ENCODE measurements at regions of chr6 and their contacts with region 1.

Region 1: GRCh38 chr6:56359201-56359899 is 112.0 kb upstream of the COL21A1 start:
- DNase-seq: peak; percentile 54 to 70
- H3K4me3 ChIP-seq: no peak overlapping the region
- H3K4me3 Mint-ChIP-seq: no peak overlapping the region
- H3K27ac Mint-ChIP-seq: no peak overlapping the region
- H3K4me1 ChIP-seq: no peaks in the 10 kb centered on the region
- H3K4me1 Mint-ChIP-seq: peaks cover under 1% of the 10 kb centered on the region
- H3K27me3 ChIP-seq: no peaks in the 10 kb centered on the region
- H3K27me3 Mint-ChIP-seq: no peaks in the 10 kb centered on the region
- CTCF ChIP-seq: peak; percentile 73 to 84

Region 2: GRCh38 chr6:56314683-56315523 is 44.4 kb before region 1 on chr6:
- CTCF ChIA-PET with region 1: no interaction called
- POLR2A ChIA-PET with region 1: no interaction called
- intact Hi-C with region 1: loop called (anchors 2 kb)
- DNase-seq: peak; percentile 35 to 60
- H3K4me3 ChIP-seq: no peak overlapping the region
- H3K4me3 Mint-ChIP-seq: no peak overlapping the region
- H3K27ac Mint-ChIP-seq: no peak overlapping the region
- H3K4me1 ChIP-seq: no peaks in the 10 kb centered on the region
- H3K4me1 Mint-ChIP-seq: peaks cover 8% of the 10 kb centered on the region
- H3K27me3 ChIP-seq: no peaks in the 10 kb centered on the region
- H3K27me3 Mint-ChIP-seq: no peaks in the 10 kb centered on the region
- CTCF ChIP-seq: peak; percentile 72 to 76

Region 3: GRCh38 chr6:56484669-56485068 is 125.3 kb after region 1 on chr6:
- CTCF ChIA-PET with region 1: no interaction called
- POLR2A ChIA-PET with region 1: no interaction called
- intact Hi-C with region 1: loop called (anchors 2 kb)
- DNase-seq: no peak
- H3K4me3 ChIP-seq: no peak overlapping the region
- H3K4me3 Mint-ChIP-seq: no peak overlapping the region
- H3K27ac Mint-ChIP-seq: no peak overlapping the region
- H3K4me1 ChIP-seq: peaks cover 20% of the 10 kb centered on the region
- H3K4me1 Mint-ChIP-seq: peaks cover 12% of the 10 kb centered on the region
- H3K27me3 ChIP-seq: no peaks in the 10 kb centered on the region
- H3K27me3 Mint-ChIP-seq: no peaks in the 10 kb centered on the region
- CTCF ChIP-seq: no peak

Region 4: DNA sequence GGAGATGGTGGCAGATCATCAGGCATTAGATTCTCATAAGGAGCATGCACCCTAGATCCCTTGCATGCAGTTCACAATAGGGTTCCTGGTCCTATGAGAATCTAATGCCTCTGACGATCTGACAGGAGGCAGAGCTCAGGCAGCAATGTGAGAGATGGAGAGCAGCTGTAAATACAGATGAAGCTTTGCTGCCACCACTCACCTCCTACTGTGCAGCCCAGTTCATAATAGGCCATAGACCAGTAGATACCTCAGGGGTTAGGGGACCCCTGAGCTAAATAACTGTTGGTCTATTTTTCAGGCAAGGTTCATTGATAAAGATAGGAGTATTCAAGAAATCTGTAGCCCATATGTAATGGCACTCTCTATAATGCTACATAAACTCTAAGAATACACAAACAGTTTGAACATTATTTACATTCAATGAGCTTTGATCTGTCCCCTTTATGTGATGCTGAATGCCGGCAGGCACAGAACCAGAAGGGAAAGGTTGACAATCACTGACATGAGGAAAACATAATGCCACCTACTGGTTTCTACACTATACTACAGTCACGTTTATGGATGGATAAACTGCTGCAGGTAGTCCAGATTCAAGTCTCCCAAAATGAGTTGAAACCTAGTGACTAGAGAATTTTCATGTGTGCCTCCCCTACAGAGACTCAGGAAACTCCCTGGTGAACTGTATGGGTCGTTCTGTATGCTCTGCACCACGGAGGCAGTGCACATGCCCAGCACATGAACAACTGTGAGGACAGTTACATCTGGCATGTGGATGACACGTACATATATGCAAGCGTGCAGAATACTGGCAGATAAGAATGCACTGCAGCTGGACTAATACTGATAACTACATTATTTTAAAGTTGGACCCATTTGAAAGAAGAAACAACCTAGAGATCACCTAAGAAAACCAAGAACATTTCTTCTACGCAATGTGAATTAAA is 211.3 kb after region 1 on chr6:
- CTCF ChIA-PET with region 1: no interaction called
- POLR2A ChIA-PET with region 1: no interaction called
- intact Hi-C with region 1: loop called (anchors 1 kb)
- DNase-seq: peak in 1 of 2 experiments; percentile 37
- H3K4me3 ChIP-seq: no peak overlapping the region
- H3K4me3 Mint-ChIP-seq: no peak overlapping the region
- H3K27ac Mint-ChIP-seq: no peak overlapping the region
- H3K4me1 ChIP-seq: no peaks in the 10 kb centered on the region
- H3K4me1 Mint-ChIP-seq: no peaks in the 10 kb centered on the region
- H3K27me3 ChIP-seq: no peaks in the 10 kb centered on the region
- H3K27me3 Mint-ChIP-seq: no peaks in the 10 kb centered on the region
- CTCF ChIP-seq: peak; percentile 30 to 57

Region 5: GRCh38 chr6:56595490-56596122 is 236.3 kb after region 1 on chr6:
- CTCF ChIA-PET with region 1: interaction called, 3 read pairs
- POLR2A ChIA-PET with region 1: no interaction called
- intact Hi-C with region 1: loop called (anchors 1 kb)
- DNase-seq: peak in 1 of 2 experiments; percentile 35
- H3K4me3 ChIP-seq: no peak overlapping the region
- H3K4me3 Mint-ChIP-seq: no peak overlapping the region
- H3K27ac Mint-ChIP-seq: no peak overlapping the region
- H3K4me1 ChIP-seq: no peaks in the 10 kb centered on the region
- H3K4me1 Mint-ChIP-seq: no peaks in the 10 kb centered on the region
- H3K27me3 ChIP-seq: no peaks in the 10 kb centered on the region
- H3K27me3 Mint-ChIP-seq: no peaks in the 10 kb centered on the region
- CTCF ChIP-seq: peak; percentile 61 to 67

Region 6: DNA sequence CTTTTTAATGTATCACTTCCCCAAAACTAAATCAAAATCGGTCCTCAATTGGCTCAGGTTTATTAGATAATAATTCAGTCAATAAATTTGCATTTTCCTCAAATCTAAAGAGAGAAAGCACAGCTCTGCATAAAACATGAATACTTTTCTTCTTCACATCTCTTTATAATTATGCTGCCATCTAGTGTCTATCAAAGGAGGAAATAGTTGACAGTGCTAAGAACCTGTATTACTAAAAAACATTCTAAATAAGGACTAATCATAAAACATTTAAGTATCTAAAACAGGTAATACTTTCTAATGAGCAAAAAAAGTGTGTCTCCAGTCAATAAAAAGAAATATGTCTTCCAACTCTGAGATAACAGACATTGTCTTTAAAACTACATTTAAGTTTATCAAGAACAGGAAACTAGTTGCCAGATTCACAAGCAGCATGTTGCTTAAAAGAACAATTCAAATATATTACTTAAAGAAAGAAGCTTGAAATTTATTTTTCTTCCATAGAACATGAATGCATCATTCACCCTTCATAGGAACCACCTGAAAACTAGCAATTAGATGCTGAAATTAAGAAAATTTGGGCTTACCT is 339.8 kb after region 1 on chr6:
- CTCF ChIA-PET with region 1: no interaction called
- POLR2A ChIA-PET with region 1: no interaction called
- intact Hi-C with region 1: loop called (anchors 1 kb)
- DNase-seq: no peak
- H3K4me3 ChIP-seq: no peak overlapping the region
- H3K4me3 Mint-ChIP-seq: no peak overlapping the region
- H3K27ac Mint-ChIP-seq: no peak overlapping the region
- H3K4me1 ChIP-seq: peaks cover 8% of the 10 kb centered on the region
- H3K4me1 Mint-ChIP-seq: peaks cover 7% of the 10 kb centered on the region
- H3K27me3 ChIP-seq: no peaks in the 10 kb centered on the region
- H3K27me3 Mint-ChIP-seq: no peaks in the 10 kb centered on the region
- CTCF ChIP-seq: peak; percentile 38 to 46

Region 7: GRCh38 chr6:56851541-56852259 is 492.4 kb after region 1 on chr6:
- CTCF ChIA-PET with region 1: no interaction called
- POLR2A ChIA-PET with region 1: no interaction called
- intact Hi-C with region 1: loop called (anchors 10 kb)
- DNase-seq: peak in 1 of 2 experiments; percentile 56
- H3K4me3 ChIP-seq: no peak overlapping the region
- H3K4me3 Mint-ChIP-seq: no peak overlapping the region
- H3K27ac Mint-ChIP-seq: no peak overlapping the region
- H3K4me1 ChIP-seq: peaks cover 6% of the 10 kb centered on the region; the same call in 1 of the 2 replicates
- H3K4me1 Mint-ChIP-seq: peaks cover 10% of the 10 kb centered on the region
- H3K27me3 ChIP-seq: no peaks in the 10 kb centered on the region
- H3K27me3 Mint-ChIP-seq: no peaks in the 10 kb centered on the region
- CTCF ChIP-seq: peak; percentile 39 to 47

Measured in Caco-2 (cell line).